ENCODE measurements at regions of chr13 and their contacts with region 1.

Region 1: GRCh38 chr13:26186118-26186870 is 35.8 kb downstream of the RNF6 start:
- ATAC-seq: peak; percentile 53 to 97 (median 82)
- H3K4me3 ChIP-seq: peak overlapping the region; percentile 11 to 25 (median 21)
- H3K27ac ChIP-seq: no peak overlapping the region
- H3K4me1 ChIP-seq: no peaks in the 10 kb centered on the region

Region 2: DNA sequence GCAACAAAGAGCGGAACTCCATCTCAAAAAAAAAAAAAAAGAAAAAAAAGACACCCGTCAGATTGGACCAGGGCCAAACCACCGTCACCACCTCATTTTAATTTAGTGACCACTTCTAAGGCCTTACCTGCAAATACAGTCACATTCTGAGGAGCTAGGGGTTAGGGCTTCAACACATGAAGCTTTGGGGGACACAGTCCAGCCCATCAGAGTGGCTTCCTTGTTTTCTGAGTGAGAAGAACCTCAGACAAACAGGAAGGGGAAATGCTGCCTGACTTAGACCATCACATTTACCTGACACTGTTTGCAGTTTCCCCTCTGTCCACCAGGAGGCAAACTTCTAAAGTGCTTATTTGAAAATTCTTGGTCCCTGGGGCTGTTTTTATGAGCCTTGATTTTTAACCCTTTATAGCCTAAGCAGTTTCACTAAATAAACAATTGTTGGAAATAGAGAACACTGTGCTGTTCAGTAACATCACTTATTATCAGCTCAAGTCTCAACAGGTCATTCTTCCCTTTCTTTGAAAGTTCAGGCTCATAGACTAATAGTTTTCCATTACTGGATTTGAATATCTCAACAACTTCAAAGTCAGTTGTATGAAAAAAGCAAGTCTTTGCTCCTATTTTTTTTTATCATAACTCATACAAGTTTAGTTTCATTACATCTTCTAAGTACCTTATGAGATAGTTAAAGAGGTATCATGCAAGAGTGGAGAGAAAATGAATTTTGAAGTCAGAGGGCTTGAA is 296.3 kb after region 1 on chr13:
- in situ Hi-C with region 1: loop called in 3 of 9 experiments (anchors 10 to 25 kb)
- ATAC-seq: peak in 4 of 8 experiments; percentile 27 to 67 (median 52)
- H3K4me3 ChIP-seq: no peak overlapping the region
- H3K27ac ChIP-seq: no peak overlapping the region
- H3K4me1 ChIP-seq: peaks cover 0 to 2% of the 10 kb centered on the region in 2 donors

Region 3: GRCh38 chr13:26698392-26699196 is 512.3 kb after region 1 on chr13:
- in situ Hi-C with region 1: loop called in 5 of 9 experiments (anchors 10 to 25 kb)
- ATAC-seq: peak; percentile 88 to 95 (median 94)
- H3K4me3 ChIP-seq: no peak overlapping the region
- H3K27ac ChIP-seq: no peak overlapping the region
- H3K4me1 ChIP-seq: no peaks in the 10 kb centered on the region

Measured in motor neuron (in vitro differentiated cells).